ENCODE measurements at regions of chr20 and their contacts with region 1.

Region 1: DNA sequence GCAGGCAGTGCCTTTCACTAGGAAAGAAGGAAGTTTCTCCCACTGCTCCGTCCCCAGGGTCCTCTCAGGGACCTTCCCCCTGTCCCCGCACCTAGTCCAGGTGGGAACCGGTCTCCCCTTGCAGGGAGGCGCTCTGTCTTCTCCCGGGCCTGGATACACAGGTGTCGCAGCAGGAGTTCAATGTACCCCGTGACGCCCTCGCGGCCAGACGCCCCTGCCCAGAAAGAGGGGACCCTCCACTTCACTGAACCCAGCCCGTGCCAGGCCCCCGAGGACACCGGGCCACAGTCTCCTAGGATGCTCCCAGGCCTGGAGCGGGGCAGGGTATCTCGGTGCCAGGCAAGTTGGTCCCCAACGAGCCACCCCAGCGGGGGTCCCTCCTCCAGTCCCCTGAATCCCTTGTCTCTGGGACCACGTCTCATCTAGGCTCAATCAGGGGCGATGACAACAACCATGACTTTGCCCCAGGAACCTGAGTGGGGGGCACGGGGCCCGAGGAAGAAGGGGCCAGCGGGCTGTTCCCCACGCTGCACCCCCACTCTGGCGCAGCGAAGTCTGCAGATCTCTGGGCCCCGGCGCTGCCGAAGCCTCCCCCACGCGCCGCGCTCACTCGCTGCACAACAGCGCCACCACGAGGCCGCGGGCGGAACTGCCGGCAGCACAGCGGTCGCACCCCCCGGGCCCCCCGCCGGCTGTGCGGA is 103.0 kb downstream of the EDN3 start:
- DNase-seq: peak in 4 of 5 donors; percentile 29 to 75 (median 40)
- ATAC-seq: peak in 3 of 4 donors; percentile 33 to 70 (median 56)
- H3K4me3 ChIP-seq: peak overlapping the region in 4 of 12 donors; percentile 3 to 11 (median 4)
- H3K27ac ChIP-seq: no peak overlapping the region
- H3K4me1 ChIP-seq: peaks cover 0 to 18% (median 7%) of the 10 kb centered on the region in 12 donors
- H3K27me3 ChIP-seq: peaks cover 9 to 81% (median 47%) of the 10 kb centered on the region in 9 donors
- CTCF ChIP-seq: peak; percentile 88 to 98 (median 94)
- POLR2A ChIP-seq: no peak

Region 2: GRCh38 chr20:59055295-59055694 is 348.1 kb before region 1 on chr20:
- intact Hi-C with region 1: loop called in 3 of 10 experiments (anchors 10 kb)
- DNase-seq: no peak
- ATAC-seq: no peak
- H3K4me3 ChIP-seq: no peak overlapping the region
- H3K27ac ChIP-seq: no peak overlapping the region
- H3K4me1 ChIP-seq: no peaks in the 10 kb centered on the region
- H3K27me3 ChIP-seq: peaks cover 0 to 10% (median 0%) of the 10 kb centered on the region in 9 donors
- CTCF ChIP-seq: peak in 9 of 12 donors; percentile 30 to 63 (median 37)
- POLR2A ChIP-seq: no peak

Measured in heart left ventricle (tissue), 16 donors.